ENCODE measurements at regions of chr12 and their contacts with region 1.

Region 1: DNA sequence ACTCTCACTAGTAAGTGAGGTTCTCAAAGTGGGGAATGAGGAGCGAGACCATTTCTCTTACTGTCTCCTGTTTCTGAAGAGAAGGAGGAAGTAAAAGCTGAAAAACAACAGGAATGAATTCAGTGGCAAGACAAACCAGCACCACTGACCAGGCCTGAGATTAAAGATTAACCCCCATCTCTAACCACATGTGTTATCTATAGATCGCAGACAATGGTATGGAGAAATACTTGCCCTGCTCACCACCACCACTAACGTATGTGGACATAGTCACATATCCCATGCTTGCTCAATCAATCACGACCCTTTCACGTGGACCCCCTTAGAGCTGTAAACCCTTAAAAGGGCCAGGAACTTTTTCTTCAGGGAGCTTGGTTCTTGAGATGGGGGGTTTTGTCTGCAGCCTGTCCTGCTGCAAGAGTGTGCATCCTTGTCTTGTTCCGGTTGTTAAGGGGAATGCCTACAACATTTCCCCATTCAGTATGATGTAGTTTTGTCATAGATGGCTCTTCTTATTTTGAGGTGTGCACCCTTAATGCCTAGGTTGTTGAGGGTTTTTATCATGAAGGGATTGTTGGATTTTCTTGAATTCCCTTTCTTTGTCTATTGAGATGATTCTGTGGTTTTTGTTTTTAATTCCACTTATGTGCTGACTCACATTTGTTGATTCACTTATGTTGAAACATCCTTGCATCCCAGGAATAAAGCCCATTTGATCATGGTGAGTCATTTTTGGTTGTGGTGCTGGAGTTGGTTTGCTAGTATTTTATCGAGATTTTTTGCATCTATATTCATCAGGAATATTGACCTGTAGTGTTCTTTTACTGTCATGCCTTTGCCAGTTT is 698.8 kb upstream of the LMO3 start:
- DNase-seq: no peak
- H3K4me3 ChIP-seq: no peak overlapping the region
- H3K27ac ChIP-seq: no peak overlapping the region
- H3K4me1 ChIP-seq: no peaks in the 10 kb centered on the region
- H3K27me3 ChIP-seq: no peaks in the 10 kb centered on the region
- CTCF ChIP-seq: no peak
- EP300 ChIP-seq: no peak
- POLR2A ChIP-seq: no peak

Region 2: DNA sequence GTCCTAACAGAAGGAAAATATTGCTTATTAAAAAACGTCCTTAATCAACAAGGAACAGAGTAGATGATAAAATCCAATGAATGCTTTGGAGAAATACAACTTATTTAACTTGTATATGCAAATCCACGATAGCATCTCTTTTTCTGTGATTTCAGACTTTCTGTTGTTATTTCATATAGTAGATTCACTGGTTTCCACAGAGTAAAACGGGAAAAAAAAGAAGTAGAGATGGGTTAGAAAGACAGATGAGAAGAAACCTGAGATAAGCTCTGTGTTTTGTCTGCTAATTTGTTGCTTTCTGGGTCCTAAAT is 337.6 kb after region 1 on chr12:
- in situ Hi-C with region 1: no loop called
- intact Hi-C with region 1: no loop called
- DNase-seq: no peak
- H3K4me3 ChIP-seq: no peak overlapping the region
- H3K27ac ChIP-seq: no peak overlapping the region
- H3K4me1 ChIP-seq: no peaks in the 10 kb centered on the region
- H3K27me3 ChIP-seq: no peaks in the 10 kb centered on the region
- CTCF ChIP-seq: peak in 1 of 5 experiments; percentile 3
- EP300 ChIP-seq: no peak
- POLR2A ChIP-seq: no peak

Region 3: GRCh38 chr12:18130851-18131250 is 826.1 kb after region 1 on chr12:
- in situ Hi-C with region 1: no loop called
- intact Hi-C with region 1: loop called (anchors 5 kb)
- DNase-seq: no peak
- H3K4me3 ChIP-seq: no peak overlapping the region
- H3K27ac ChIP-seq: no peak overlapping the region
- H3K4me1 ChIP-seq: no peaks in the 10 kb centered on the region
- H3K27me3 ChIP-seq: no peaks in the 10 kb centered on the region
- CTCF ChIP-seq: no peak
- EP300 ChIP-seq: no peak
- POLR2A ChIP-seq: no peak

Measured in transverse colon (tissue), 4 donors.